Left cardiac atrium (tissue), 4 donors: ENCODE measurements at regions of chr16 and their contacts with region 1.

Region 1: DNA sequence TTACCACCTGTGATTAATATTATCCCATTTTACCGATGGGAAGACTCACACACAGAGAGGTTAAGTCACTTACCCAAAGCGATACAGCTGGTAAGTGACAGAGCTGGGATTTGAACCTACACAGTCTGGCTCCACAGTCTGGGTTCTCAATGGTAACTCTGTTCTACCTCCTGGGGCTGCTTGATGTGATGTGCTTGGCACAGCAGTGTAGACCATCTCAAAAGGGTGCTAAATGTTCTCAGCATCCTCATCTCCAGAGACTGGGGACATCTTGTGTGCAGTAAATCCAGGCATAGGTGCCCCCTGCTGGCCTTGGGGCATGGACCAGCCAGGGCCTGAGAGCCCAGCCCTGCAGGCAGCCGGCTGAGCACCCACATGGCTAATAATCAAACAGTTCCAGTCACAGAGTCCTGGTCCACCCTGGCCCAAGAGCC is 15.4 kb upstream of the KATNB1 start:
- DNase-seq: peak; percentile 50
- ATAC-seq: peak; percentile 47 to 80

Region 2: GRCh38 chr16:57576429-57576870 is 143.7 kb before region 1 on chr16:
- intact Hi-C with region 1: loop called (anchors 5 to 10 kb)
- DNase-seq: peak; percentile 79
- ATAC-seq: peak; percentile 71 to 77